Activated CD8-positive, alpha-beta T cell treated with anti-CD3 and anti-CD28 coated beads for 36 hours (primary cell): ENCODE measurements at regions of chr14 and their contacts with region 1.

Region 1: DNA sequence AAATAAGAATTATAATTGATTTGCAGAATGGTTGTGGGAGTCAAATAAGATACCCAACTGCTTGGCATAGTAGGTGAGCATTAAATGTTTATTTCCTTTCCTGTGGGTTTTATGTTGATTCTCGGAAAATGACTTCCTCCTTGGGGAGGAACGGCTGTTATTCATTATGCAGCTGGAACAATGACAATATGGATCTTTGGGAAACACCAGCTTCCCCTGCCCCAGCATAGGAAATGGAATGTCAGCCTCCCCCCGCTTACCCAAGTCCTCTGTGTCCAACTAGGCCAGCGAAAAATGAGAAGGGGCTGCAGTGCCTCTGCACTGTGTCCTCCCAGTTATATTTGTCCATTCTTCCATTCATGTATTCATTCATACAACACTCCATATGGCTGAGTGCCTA is 11.7 kb upstream of the CCDC177 start:
- DNase-seq: no peak
- ATAC-seq: no peak
- H3K4me3 Mint-ChIP-seq: no peak overlapping the region
- H3K27ac Mint-ChIP-seq: no peak overlapping the region
- H3K4me1 Mint-ChIP-seq: no peaks in the 10 kb centered on the region
- H3K27me3 Mint-ChIP-seq: peaks cover 3% of the 10 kb centered on the region
- CTCF ChIP-seq: no peak

Region 2: DNA sequence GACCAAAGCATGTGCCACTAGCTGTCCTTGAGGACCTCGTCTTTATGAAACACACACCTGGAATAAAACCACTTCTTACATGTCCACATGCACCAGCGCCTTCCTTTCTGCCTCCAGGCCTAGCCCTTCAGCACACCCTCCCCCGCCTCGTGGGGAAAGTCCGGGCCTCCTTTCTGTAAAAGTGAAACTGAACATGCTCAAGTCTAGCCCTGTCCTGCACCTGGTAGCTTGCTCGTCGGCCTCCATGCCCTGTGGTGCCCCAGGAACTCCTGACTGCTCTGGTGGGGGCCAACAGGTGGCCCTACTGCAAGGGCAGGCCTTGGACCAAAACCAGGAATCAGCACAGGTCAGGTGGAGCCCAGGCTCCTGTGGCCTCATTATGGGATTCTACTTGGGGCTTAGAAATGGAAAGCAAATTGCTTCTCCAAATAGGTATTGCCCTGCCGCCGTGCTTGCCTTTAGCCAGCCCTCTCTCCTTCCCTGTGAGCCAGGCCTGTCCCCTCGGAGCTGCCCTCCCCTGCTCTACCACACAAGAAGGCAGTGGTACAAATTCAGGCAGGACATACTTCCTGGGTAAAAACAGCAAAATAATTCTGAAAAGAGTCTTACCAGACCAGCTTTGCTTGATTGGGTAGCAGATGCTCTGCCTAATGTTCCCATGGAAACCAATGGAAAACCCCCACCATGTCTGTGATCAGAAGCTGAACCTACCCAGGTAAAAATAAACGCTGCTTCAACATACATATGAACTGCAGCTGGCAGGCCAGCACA is 231.8 kb before region 1 on chr14:
- CTCF ChIA-PET with region 1: no interaction called
- POLR2A ChIA-PET with region 1: no interaction called
- intact Hi-C with region 1: no loop called
- DNase-seq: peak; percentile 89
- ATAC-seq: peak; percentile 77
- H3K4me3 Mint-ChIP-seq: peak overlapping the region; percentile 63
- H3K27ac Mint-ChIP-seq: peak overlapping the region; percentile 88
- H3K4me1 Mint-ChIP-seq: peaks cover 39% of the 10 kb centered on the region
- H3K27me3 Mint-ChIP-seq: no peaks in the 10 kb centered on the region
- CTCF ChIP-seq: no peak

Region 3: GRCh38 chr14:69613312-69614073 is 27.1 kb after region 1 on chr14:
- CTCF ChIA-PET with region 1: no interaction called
- POLR2A ChIA-PET with region 1: no interaction called
- intact Hi-C with region 1: no loop called
- DNase-seq: no peak
- ATAC-seq: no peak
- H3K4me3 Mint-ChIP-seq: peak overlapping the region; percentile 96
- H3K27ac Mint-ChIP-seq: peak overlapping the region; percentile 92
- H3K4me1 Mint-ChIP-seq: peaks cover 64% of the 10 kb centered on the region
- H3K27me3 Mint-ChIP-seq: no peaks in the 10 kb centered on the region
- CTCF ChIP-seq: no peak

Region 4: GRCh38 chr14:69715725-69716477 is 129.5 kb after region 1 on chr14:
- CTCF ChIA-PET with region 1: interaction called, 10 read pairs
- POLR2A ChIA-PET with region 1: no interaction called
- intact Hi-C with region 1: no loop called
- DNase-seq: no peak
- ATAC-seq: peak; percentile 25
- H3K4me3 Mint-ChIP-seq: no peak overlapping the region
- H3K27ac Mint-ChIP-seq: peak overlapping the region; percentile 73
- H3K4me1 Mint-ChIP-seq: peaks cover 32% of the 10 kb centered on the region
- H3K27me3 Mint-ChIP-seq: no peaks in the 10 kb centered on the region
- CTCF ChIP-seq: no peak